CD14-positive monocyte (primary cell): ENCODE measurements at regions of chr17 and their contacts with region 1.

Region 1: GRCh38 chr17:1628856-1629646 is 417 bp upstream of the SLC43A2 start:
- DNase-seq: peak; percentile 89 to 95 (median 92)
- H3K4me3 ChIP-seq: peak overlapping the region; percentile 95 to 100 (median 99)
- H3K4me3 Mint-ChIP-seq: peak overlapping the region; percentile 92 to 95
- H3K27ac ChIP-seq: peak overlapping the region; percentile 95
- H3K27ac Mint-ChIP-seq: peak overlapping the region; percentile 91 to 97 (median 94)
- H3K4me1 ChIP-seq: peaks cover 58 to 71% of the 10 kb centered on the region in 2 donors
- H3K4me1 Mint-ChIP-seq: peaks cover 52% of the 10 kb centered on the region
- H3K27me3 ChIP-seq: no peaks in the 10 kb centered on the region
- H3K27me3 Mint-ChIP-seq: peaks cover 0 to 17% (median 1%) of the 10 kb centered on the region in 3 donors
- CTCF ChIP-seq: no peak

Region 2: DNA sequence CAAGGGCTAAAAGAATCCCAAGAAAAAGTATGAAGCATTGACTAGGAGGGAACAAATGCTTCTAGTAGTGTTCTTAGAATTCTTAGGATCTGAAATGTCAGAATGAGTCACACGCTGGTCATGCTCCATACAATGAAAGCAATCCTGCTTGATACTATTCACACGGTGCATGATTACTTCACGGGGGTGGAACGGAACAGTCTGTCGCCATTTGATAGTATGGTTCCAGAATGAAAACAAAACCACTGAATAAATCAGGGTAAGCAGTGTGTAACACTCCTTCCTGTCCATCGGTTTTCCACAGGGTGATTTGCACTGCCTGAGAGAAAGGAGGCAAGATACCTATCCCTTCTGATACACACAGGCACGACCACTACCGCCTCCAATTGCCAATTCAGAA is 206.1 kb before region 1 on chr17:
- intact Hi-C with region 1: no loop called
- DNase-seq: no peak
- H3K4me3 ChIP-seq: no peak overlapping the region
- H3K4me3 Mint-ChIP-seq: no peak overlapping the region
- H3K27ac ChIP-seq: no peak overlapping the region
- H3K27ac Mint-ChIP-seq: peak overlapping the region in 1 of 7 donors; percentile 51
- H3K4me1 ChIP-seq: no peaks in the 10 kb centered on the region
- H3K4me1 Mint-ChIP-seq: no peaks in the 10 kb centered on the region
- H3K27me3 ChIP-seq: no peaks in the 10 kb centered on the region
- H3K27me3 Mint-ChIP-seq: peaks cover 0 to 2% (median 0%) of the 10 kb centered on the region in 3 donors
- CTCF ChIP-seq: no peak

Region 3: DNA sequence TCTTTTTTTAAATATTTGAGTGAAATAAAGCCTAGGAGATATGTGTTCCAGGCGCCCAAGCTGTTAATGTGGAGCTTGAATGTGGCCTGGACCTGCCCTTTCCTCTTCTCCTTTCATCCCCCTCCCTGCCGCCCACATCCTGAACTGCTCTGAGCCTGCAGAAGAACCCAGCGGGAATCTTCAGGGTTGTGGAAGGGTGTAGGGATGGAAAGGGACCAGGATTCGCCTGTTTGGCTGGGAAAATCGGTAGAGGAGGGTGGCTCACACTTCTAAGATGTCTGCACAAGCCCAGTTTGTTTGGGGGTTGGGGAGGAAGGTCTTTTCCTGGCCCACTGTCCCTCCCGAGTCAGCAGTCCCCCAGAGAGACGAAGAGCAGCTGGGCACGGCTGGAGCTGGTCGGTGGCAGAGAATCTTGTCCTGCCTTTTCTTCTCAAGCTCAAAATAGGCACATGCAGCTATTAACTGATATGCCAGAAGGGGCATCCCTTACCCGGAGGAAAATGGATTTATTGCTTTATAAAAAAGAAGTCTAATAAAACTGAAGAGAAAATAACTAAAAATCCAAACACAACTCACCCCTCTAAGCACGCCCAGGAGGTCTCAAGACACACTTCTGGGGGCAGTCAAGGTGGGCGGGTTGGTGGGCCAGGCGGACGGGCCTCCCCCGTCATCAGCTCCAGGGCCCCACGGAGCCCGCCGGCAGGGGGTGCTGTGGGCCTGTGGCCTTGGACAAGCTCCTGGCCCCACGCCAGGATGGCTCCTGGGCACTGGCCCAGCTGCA is 54.9 kb before region 1 on chr17:
- intact Hi-C with region 1: loop called (anchors 1 kb)
- DNase-seq: peak; percentile 83 to 85 (median 85)
- H3K4me3 ChIP-seq: no peak overlapping the region
- H3K4me3 Mint-ChIP-seq: no peak overlapping the region
- H3K27ac ChIP-seq: peak overlapping the region; percentile 1 to 99
- H3K27ac Mint-ChIP-seq: peak overlapping the region; percentile 46 to 100 (median 85)
- H3K4me1 ChIP-seq: peaks cover 62 to 69% of the 10 kb centered on the region in 2 donors
- H3K4me1 Mint-ChIP-seq: peaks cover 56% of the 10 kb centered on the region
- H3K27me3 ChIP-seq: no peaks in the 10 kb centered on the region
- H3K27me3 Mint-ChIP-seq: peaks cover 0 to 9% (median 0%) of the 10 kb centered on the region in 3 donors
- CTCF ChIP-seq: peak; percentile 97

Region 4: GRCh38 chr17:1590031-1590748 is 38.9 kb before region 1 on chr17:
- intact Hi-C with region 1: loop called in 1 of 2 experiments (anchors 5 kb)
- DNase-seq: peak; percentile 85 to 95 (median 92)
- H3K4me3 ChIP-seq: no peak overlapping the region
- H3K4me3 Mint-ChIP-seq: peak overlapping the region; percentile 35 to 60
- H3K27ac ChIP-seq: peak overlapping the region; percentile 88 to 99
- H3K27ac Mint-ChIP-seq: peak overlapping the region; percentile 98 to 99 (median 99)
- H3K4me1 ChIP-seq: peaks cover 76 to 84% of the 10 kb centered on the region in 2 donors
- H3K4me1 Mint-ChIP-seq: peaks cover 75% of the 10 kb centered on the region
- H3K27me3 ChIP-seq: no peaks in the 10 kb centered on the region
- H3K27me3 Mint-ChIP-seq: peaks cover 0 to 6% (median 2%) of the 10 kb centered on the region in 3 donors
- CTCF ChIP-seq: no peak

Region 5: GRCh38 chr17:1606352-1607033 is 22.6 kb before region 1 on chr17:
- intact Hi-C with region 1: loop called (anchors 2 kb)
- DNase-seq: peak in 1 of 3 donors; percentile 68
- H3K4me3 ChIP-seq: peak overlapping the region in 2 of 3 experiments; percentile 9 to 43
- H3K4me3 Mint-ChIP-seq: peak overlapping the region in 1 of 2 donors; percentile 50
- H3K27ac ChIP-seq: peak overlapping the region; percentile 99 to 100
- H3K27ac Mint-ChIP-seq: peak overlapping the region; percentile 98 to 100 (median 100)
- H3K4me1 ChIP-seq: peaks cover 69 to 70% of the 10 kb centered on the region in 2 donors
- H3K4me1 Mint-ChIP-seq: peaks cover 56% of the 10 kb centered on the region
- H3K27me3 ChIP-seq: no peaks in the 10 kb centered on the region
- H3K27me3 Mint-ChIP-seq: peaks cover 0 to 4% (median 2%) of the 10 kb centered on the region in 3 donors
- CTCF ChIP-seq: no peak

Region 6: GRCh38 chr17:1611715-1612114 is 17.3 kb before region 1 on chr17:
- intact Hi-C with region 1: loop called (anchors 2 kb)
- DNase-seq: peak; percentile 76 to 96 (median 91)
- H3K4me3 ChIP-seq: peak overlapping the region in 1 of 3 experiments; percentile 47
- H3K4me3 Mint-ChIP-seq: peak overlapping the region; percentile 65 to 67
- H3K27ac ChIP-seq: peak overlapping the region; percentile 81 to 89
- H3K27ac Mint-ChIP-seq: peak overlapping the region; percentile 94 to 99 (median 96)
- H3K4me1 ChIP-seq: peaks cover 84 to 86% of the 10 kb centered on the region in 2 donors
- H3K4me1 Mint-ChIP-seq: peaks cover 80% of the 10 kb centered on the region
- H3K27me3 ChIP-seq: no peaks in the 10 kb centered on the region
- H3K27me3 Mint-ChIP-seq: peaks cover 0 to 2% (median 0%) of the 10 kb centered on the region in 3 donors
- CTCF ChIP-seq: no peak